Mammary epithelial cell (primary cell): ENCODE measurements at regions of chr12 and their contacts with region 1.

Region 1: DNA sequence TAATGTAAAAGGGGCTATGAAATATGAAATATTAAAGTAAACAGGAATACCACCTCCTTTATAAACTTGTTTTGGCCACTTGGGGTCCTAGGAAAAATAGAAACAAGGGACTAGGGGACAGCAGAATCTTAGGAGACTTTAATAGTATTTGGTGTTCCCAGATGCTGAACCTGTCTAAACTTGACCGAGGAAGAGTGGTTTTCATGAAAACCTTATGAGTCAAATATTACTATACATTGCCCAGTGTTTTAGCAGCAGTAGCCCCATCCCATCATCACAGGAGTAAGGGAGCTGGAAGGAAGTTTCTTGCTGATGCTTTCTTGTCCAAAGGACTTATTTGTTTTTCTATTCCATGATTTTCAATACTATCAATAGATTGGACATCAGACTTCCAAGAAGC is 177.5 kb upstream of the CAND1 start:
- DNase-seq: peak; percentile 77
- H3K4me3 ChIP-seq: peak overlapping the region in 2 of 3 experiments; percentile 29 to 35
- H3K27ac ChIP-seq: peak overlapping the region; percentile 52
- H3K4me1 ChIP-seq: peaks cover 29% of the 10 kb centered on the region
- H3K27me3 ChIP-seq: no peaks in the 10 kb centered on the region
- CTCF ChIP-seq: no peak

Region 2: GRCh38 chr12:66999141-66999540 is 92.5 kb before region 1 on chr12:
- CTCF ChIA-PET with region 1: no interaction called
- dilution Hi-C with region 1: no loop called
- in situ Hi-C with region 1: no loop called
- intact Hi-C with region 1: no loop called
- DNase-seq: no peak
- H3K4me3 ChIP-seq: no peak overlapping the region
- H3K27ac ChIP-seq: no peak overlapping the region
- H3K4me1 ChIP-seq: no peaks in the 10 kb centered on the region
- H3K27me3 ChIP-seq: no peaks in the 10 kb centered on the region
- CTCF ChIP-seq: no peak

Region 3: DNA sequence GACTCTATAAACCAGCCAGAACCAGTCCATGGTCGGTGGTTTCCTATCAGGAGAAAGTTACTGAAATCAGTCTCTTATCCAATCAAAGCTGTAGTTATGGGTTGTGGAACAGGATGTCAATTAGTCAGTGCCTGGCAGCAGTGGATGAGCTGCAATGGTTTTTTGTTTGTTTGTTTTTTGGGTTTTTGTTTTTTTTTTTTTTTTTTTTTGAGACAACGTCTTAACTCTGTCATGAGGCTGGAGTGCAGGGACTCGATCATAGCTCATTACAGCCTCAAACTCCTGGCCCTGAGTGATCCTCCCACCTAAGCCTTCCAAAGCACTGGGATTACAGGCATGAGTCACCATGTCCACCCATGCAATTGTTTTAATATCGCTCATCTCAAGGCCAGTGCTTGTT is 64.2 kb after region 1 on chr12:
- CTCF ChIA-PET with region 1: interaction called, 38 read pairs
- dilution Hi-C with region 1: no loop called
- in situ Hi-C with region 1: no loop called
- intact Hi-C with region 1: no loop called
- DNase-seq: peak; percentile 77
- H3K4me3 ChIP-seq: no peak overlapping the region
- H3K27ac ChIP-seq: no peak overlapping the region
- H3K4me1 ChIP-seq: peaks cover 6% of the 10 kb centered on the region
- H3K27me3 ChIP-seq: no peaks in the 10 kb centered on the region
- CTCF ChIP-seq: no peak